ENCODE measurements at regions of chr9 and their contacts with region 1.

Region 1: GRCh38 chr9:37592108-37592951 is at the start of gene TOMM5:
- DNase-seq: peak; percentile 98
- total RNA-seq, gene TOMM5: 52.9 TPM

Region 2: GRCh38 chr9:37575921-37576721 is 16.2 kb before region 1 on chr9 and contains the start of gene FBXO10:
- intact Hi-C with region 1: loop called (anchors 1 kb)
- DNase-seq: peak; percentile 87
- total RNA-seq, gene FBXO10: 5.9 TPM

Region 3: DNA sequence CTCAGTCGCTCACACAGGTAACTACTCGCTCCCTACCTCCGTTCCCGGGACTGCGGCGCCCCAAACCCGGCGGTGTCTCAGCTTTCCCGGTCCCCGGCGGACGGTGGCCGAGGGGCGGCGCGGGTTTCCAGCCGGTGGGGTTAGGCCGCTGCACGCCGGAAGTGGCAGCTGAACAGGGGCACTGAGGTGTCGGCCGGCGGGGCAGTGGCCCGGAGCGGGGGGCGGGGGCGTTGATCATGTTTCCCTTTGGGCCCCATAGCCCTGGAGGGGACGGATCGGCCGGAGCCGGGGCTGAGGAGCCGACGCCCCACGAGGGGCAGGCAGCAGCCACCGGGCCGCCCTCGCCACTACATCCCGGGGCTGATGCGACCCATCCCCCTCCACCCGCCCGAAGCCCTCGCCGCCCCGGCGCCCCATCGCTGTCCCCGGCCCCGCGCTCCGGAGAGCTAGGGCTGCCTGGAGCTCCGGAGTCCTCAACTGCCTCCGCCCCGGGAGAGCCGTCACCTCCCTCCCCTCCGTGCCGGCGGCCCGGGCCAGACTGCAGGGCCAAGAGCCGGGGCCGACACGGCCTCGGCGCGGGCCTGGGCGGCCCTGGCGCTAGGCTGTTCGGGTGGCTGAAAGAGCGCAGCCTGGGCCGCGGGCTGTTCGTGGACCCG is 208.4 kb after region 1 on chr9 and contains the start of gene DCAF10:
- intact Hi-C with region 1: loop called (anchors 5 kb)
- DNase-seq: peak; percentile 94
- total RNA-seq, gene DCAF10: 15.7 TPM

Region 4: GRCh38 chr9:37963936-37964739 is 371.8 kb after region 1 on chr9:
- intact Hi-C with region 1: loop called (anchors 5 kb)
- DNase-seq: no peak